B cell (primary cell): ENCODE measurements at regions of chr3 and their contacts with region 1.

Region 1: GRCh38 chr3:172595641-172596393 is 72.6 kb upstream of the TNFSF10 start:
- DNase-seq: peak; percentile 72
- ATAC-seq: peak; percentile 71
- H3K4me3 ChIP-seq: peak overlapping the region in 4 of 5 experiments; percentile 22 to 50 (median 36)
- H3K4me3 Mint-ChIP-seq: peak overlapping the region; percentile 77
- H3K27ac ChIP-seq: peak overlapping the region in 1 of 2 donors; percentile 17
- H3K27ac Mint-ChIP-seq: peak overlapping the region; percentile 18
- H3K4me1 ChIP-seq: peaks cover 22 to 30% of the 10 kb centered on the region in 2 donors
- H3K4me1 Mint-ChIP-seq: peaks cover 33% of the 10 kb centered on the region
- H3K27me3 ChIP-seq: no peaks in the 10 kb centered on the region
- H3K27me3 Mint-ChIP-seq: no peaks in the 10 kb centered on the region
- CTCF ChIP-seq: peak; percentile 91

Region 2: DNA sequence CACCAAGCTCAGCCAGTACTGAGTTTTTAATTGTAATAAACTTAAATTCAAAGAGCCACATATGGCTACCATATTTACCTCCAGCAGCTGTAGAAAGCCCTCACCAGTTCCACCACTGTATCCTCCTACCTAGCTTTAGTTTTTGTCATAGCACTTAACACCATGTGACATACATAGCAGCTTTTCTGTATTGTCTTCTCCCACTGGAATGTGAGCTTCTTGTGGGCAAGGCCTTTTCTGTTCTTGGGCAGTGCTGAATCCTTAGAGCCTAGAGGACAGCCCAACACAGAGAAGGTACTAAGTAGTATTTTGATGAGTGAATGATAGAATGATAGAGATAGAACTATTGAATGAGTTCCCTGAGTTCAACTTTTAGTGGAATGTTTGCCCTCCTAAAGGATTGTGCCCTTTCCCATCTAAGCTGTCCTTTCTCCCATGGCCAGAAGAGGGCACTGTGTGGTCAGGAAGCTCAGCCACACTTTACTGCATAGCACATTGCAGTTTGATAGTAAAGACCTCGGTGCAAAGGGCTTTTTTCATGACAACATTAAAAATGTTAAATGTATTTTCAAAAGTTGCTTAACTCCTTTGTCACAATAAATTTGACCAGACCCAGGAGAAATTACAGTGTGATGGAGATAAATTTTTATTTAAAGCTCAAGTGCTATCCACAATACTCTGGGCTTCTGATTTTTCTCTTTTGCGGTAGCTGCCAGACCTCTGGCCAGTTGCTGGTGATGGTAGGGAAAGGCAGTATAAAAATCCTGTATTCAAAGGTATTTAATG is 263.4 kb before region 1 on chr3:
- CTCF ChIA-PET with region 1: interaction called, 12 read pairs
- POLR2A ChIA-PET with region 1: no interaction called
- intact Hi-C with region 1: loop called (anchors 10 kb)
- DNase-seq: peak; percentile 60
- ATAC-seq: peak; percentile 73
- H3K4me3 ChIP-seq: no peak overlapping the region
- H3K4me3 Mint-ChIP-seq: no peak overlapping the region
- H3K27ac ChIP-seq: no peak overlapping the region
- H3K27ac Mint-ChIP-seq: no peak overlapping the region
- H3K4me1 ChIP-seq: no peaks in the 10 kb centered on the region
- H3K4me1 Mint-ChIP-seq: peaks cover 2% of the 10 kb centered on the region
- H3K27me3 ChIP-seq: no peaks in the 10 kb centered on the region
- H3K27me3 Mint-ChIP-seq: no peaks in the 10 kb centered on the region
- CTCF ChIP-seq: peak; percentile 92

Region 3: GRCh38 chr3:172476347-172476746 is 119.5 kb before region 1 on chr3:
- CTCF ChIA-PET with region 1: interaction called, 17 read pairs
- POLR2A ChIA-PET with region 1: no interaction called
- intact Hi-C with region 1: no loop called
- DNase-seq: no peak
- ATAC-seq: no peak
- H3K4me3 ChIP-seq: no peak overlapping the region
- H3K4me3 Mint-ChIP-seq: peak overlapping the region; percentile 70
- H3K27ac ChIP-seq: no peak overlapping the region
- H3K27ac Mint-ChIP-seq: no peak overlapping the region
- H3K4me1 ChIP-seq: no peaks in the 10 kb centered on the region
- H3K4me1 Mint-ChIP-seq: peaks cover 9% of the 10 kb centered on the region
- H3K27me3 ChIP-seq: no peaks in the 10 kb centered on the region
- H3K27me3 Mint-ChIP-seq: no peaks in the 10 kb centered on the region
- CTCF ChIP-seq: no peak

Region 4: DNA sequence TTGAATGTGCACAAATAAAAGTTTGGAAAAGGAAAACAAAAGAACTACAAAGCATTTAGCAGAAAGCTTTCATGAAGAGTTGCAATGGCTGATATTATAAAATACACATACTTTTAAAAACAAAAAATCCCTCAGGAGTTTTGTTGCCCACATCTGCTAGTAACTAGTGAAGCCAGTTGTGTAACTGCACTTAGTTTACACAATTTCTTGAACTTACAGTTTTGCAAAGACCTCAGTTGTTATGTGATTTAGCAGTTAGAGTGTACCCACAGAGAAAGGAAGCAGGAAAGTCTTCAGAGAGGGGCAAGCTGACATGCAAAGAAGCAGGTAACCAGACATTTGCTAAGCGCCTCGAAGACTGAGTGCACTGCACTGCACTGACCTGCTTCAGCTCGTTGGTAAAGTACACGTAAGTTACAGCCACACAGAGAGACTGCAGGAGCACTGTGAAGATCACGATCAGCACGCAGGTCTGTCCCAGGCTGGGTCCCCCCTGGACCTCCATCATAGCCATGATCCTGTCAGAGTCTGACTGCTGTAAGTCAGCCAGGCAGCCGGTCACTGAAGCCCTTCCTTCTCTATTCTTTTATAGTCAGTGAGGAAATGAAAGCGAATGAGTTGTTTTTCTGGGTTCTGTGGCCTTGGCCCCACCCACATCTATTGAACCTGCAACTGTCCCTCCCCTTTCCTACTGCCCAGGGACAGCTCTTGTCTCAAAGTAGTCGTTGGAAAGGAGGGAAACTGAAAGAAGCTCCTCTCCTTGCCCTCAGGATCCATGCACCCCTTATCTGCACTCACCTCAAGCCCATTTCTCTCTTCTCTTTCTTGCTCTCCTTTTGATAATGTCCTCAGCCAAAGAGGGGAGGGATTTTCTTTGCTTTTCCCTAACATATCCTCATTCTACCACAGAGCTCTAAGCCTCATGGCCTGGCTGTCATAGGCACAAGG is 72.7 kb before region 1 on chr3 and contains the start of gene TNFSF10:
- CTCF ChIA-PET with region 1: interaction called, 20 read pairs
- POLR2A ChIA-PET with region 1: no interaction called
- intact Hi-C with region 1: loop called (anchors 2 kb)
- DNase-seq: peak; percentile 73
- ATAC-seq: peak; percentile 96
- H3K4me3 ChIP-seq: peak within 1 kb of the TSS; percentile 60 to 96 (median 81)
- H3K4me3 Mint-ChIP-seq: peak within 1 kb of the TSS; percentile 98
- H3K27ac ChIP-seq: peak within 1 kb of the TSS; percentile 67 to 84
- H3K27ac Mint-ChIP-seq: peak within 1 kb of the TSS; percentile 96
- H3K4me1 ChIP-seq: peaks cover 27 to 30% of the 10 kb centered on the region in 2 donors
- H3K4me1 Mint-ChIP-seq: peaks cover 51% of the 10 kb centered on the region
- H3K27me3 ChIP-seq: no peaks in the 10 kb centered on the region
- H3K27me3 Mint-ChIP-seq: no peaks in the 10 kb centered on the region
- CTCF ChIP-seq: no peak
- total RNA-seq, gene TNFSF10: 16.4 and 17.8 TPM in 2 replicates

Region 5: GRCh38 chr3:172607305-172608121 is 11.7 kb after region 1 on chr3:
- CTCF ChIA-PET with region 1: interaction called, 24 read pairs
- POLR2A ChIA-PET with region 1: no interaction called
- intact Hi-C with region 1: no loop called
- DNase-seq: no peak
- ATAC-seq: no peak
- H3K4me3 ChIP-seq: no peak overlapping the region
- H3K4me3 Mint-ChIP-seq: no peak overlapping the region
- H3K27ac ChIP-seq: no peak overlapping the region
- H3K27ac Mint-ChIP-seq: no peak overlapping the region
- H3K4me1 ChIP-seq: no peaks in the 10 kb centered on the region
- H3K4me1 Mint-ChIP-seq: no peaks in the 10 kb centered on the region
- H3K27me3 ChIP-seq: no peaks in the 10 kb centered on the region
- H3K27me3 Mint-ChIP-seq: no peaks in the 10 kb centered on the region
- CTCF ChIP-seq: no peak

Region 6: DNA sequence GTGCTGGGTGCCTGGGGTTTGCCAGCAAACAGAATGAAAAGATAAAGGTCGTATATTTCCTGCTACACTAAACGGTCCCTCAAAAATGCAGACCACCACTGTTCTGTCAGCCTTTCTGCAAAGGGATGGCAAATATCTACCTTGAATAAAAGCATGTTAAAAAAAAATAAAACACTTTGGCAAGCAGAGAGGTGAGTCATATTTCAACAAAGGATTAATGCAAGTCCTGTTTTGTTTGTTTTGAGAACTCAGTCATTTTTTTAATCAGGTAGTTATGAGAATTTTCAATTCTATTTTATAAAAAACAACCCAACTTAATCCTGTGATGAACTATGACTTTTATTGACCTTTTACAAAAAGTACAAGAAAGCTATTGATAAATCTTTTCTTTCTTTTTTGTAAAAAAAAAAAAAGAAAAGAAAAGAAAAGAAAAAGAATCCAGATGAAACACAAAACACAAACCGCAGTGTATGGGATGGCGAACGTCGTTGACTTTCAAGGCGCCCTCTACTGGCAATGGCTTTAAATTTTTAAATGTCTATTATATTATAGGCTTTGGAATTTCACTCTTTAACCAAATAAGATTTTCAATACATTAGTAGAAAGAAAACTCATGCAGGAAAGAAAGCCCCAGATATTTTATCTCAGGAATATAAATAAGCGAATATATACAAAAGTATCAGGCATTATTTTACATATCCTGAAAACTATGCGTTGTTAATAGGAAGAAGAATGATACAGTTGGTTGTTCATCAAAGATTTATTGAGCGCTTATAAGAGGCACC is 27.3 kb after region 1 on chr3:
- CTCF ChIA-PET with region 1: interaction called, 19 read pairs
- POLR2A ChIA-PET with region 1: interaction called, 4 read pairs
- intact Hi-C with region 1: no loop called
- DNase-seq: peak; percentile 37
- ATAC-seq: no peak
- H3K4me3 ChIP-seq: no peak overlapping the region
- H3K4me3 Mint-ChIP-seq: no peak overlapping the region
- H3K27ac ChIP-seq: no peak overlapping the region
- H3K27ac Mint-ChIP-seq: no peak overlapping the region
- H3K4me1 ChIP-seq: no peaks in the 10 kb centered on the region
- H3K4me1 Mint-ChIP-seq: peaks cover 1% of the 10 kb centered on the region
- H3K27me3 ChIP-seq: no peaks in the 10 kb centered on the region
- H3K27me3 Mint-ChIP-seq: no peaks in the 10 kb centered on the region
- CTCF ChIP-seq: peak; percentile 83

Region 7: DNA sequence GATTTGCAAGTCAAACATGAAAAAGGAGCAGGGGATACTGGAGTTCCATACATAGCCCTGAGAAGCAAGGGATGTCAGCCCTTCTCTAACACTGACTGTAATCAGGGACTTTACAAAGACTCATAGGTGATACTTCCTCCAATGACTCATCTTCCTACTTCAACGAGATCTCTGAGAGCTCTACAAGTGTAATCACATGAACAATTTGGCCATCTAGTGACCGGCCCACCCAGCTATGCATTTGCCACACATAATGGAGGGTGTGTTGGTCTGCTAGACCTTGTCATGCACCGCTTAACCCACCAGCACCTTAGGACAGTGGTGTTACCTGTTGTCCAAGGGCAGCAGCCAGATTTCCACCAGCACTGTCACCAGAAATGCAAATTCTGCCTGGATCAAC is 39.8 kb after region 1 on chr3:
- CTCF ChIA-PET with region 1: no interaction called
- POLR2A ChIA-PET with region 1: no interaction called
- intact Hi-C with region 1: no loop called
- DNase-seq: no peak
- ATAC-seq: no peak
- H3K4me3 ChIP-seq: no peak overlapping the region
- H3K4me3 Mint-ChIP-seq: no peak overlapping the region
- H3K27ac ChIP-seq: no peak overlapping the region
- H3K27ac Mint-ChIP-seq: no peak overlapping the region
- H3K4me1 ChIP-seq: no peaks in the 10 kb centered on the region
- H3K4me1 Mint-ChIP-seq: no peaks in the 10 kb centered on the region
- H3K27me3 ChIP-seq: no peaks in the 10 kb centered on the region
- H3K27me3 Mint-ChIP-seq: no peaks in the 10 kb centered on the region
- CTCF ChIP-seq: no peak

Region 8: DNA sequence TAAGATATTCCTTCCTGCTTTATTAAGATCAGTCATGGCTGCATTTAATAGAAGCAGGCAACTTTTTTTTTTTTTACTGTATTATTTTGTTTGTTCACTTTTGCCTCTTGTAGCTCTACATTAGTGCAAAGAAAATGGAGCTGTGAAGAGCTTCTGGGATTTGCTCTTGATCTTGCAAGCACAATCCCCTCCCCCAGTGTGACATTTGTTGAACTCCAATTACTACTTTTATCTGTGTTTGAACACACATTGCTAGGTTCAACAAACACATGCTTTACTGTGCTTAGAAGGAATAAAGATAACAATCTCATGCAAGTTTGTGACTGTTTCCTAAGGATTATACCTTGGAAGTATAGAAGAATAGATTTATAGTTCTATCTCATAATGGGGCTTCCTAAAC is 1450.5 kb after region 1 on chr3:
- CTCF ChIA-PET with region 1: no interaction called
- POLR2A ChIA-PET with region 1: no interaction called
- intact Hi-C with region 1: no loop called
- DNase-seq: no peak
- ATAC-seq: no peak
- H3K4me3 ChIP-seq: no peak overlapping the region
- H3K4me3 Mint-ChIP-seq: no peak overlapping the region
- H3K27ac ChIP-seq: no peak overlapping the region
- H3K27ac Mint-ChIP-seq: no peak overlapping the region
- H3K4me1 ChIP-seq: no peaks in the 10 kb centered on the region
- H3K4me1 Mint-ChIP-seq: no peaks in the 10 kb centered on the region
- H3K27me3 ChIP-seq: no peaks in the 10 kb centered on the region
- H3K27me3 Mint-ChIP-seq: no peaks in the 10 kb centered on the region
- CTCF ChIP-seq: no peak